K562 (cell line): ENCODE measurements at regions of chr1 and their contacts with region 1.

Region 1: GRCh38 chr1:226912587-226913176 is 27.4 kb upstream of the COQ8A start:
- DNase-seq: peak; percentile 64 to 81 (median 73)
- ATAC-seq: peak; percentile 98
- H3K4me3 ChIP-seq: no peak overlapping the region
- H3K27ac ChIP-seq: no peak overlapping the region
- H3K4me1 ChIP-seq: peaks cover 0 to 6% of the 10 kb centered on the region in 2 experiments; a peak in 2 of 5 replicates
- H3K27me3 ChIP-seq: no peaks in the 10 kb centered on the region
- CTCF ChIP-seq: peak; percentile 81 to 93 (median 82)
- EP300 ChIP-seq: no peak
- POLR2A ChIP-seq: no peak
- RAD21 ChIP-seq: peak; percentile 71 to 90

Region 2: GRCh38 chr1:226702957-226703831 is 209.5 kb before region 1 on chr1:
- CTCF ChIA-PET with region 1: no interaction called
- POLR2A ChIA-PET with region 1: no interaction called
- in situ Hi-C with region 1: no loop called
- intact Hi-C with region 1: no loop called
- DNase-seq: peak; percentile 49 to 90 (median 86)
- ATAC-seq: peak; percentile 86
- H3K4me3 ChIP-seq: peak overlapping the region; percentile 31
- H3K27ac ChIP-seq: peak overlapping the region; percentile 16; the same call in 1 of the 3 replicates
- H3K4me1 ChIP-seq: peaks cover 8 to 9% of the 10 kb centered on the region in 2 experiments; a peak in 2 of 5 replicates
- H3K27me3 ChIP-seq: peaks cover 27 to 45% of the 10 kb centered on the region in 2 experiments
- CTCF ChIP-seq: no peak
- EP300 ChIP-seq: no peak
- POLR2A ChIP-seq: no peak
- RAD21 ChIP-seq: no peak

Region 3: DNA sequence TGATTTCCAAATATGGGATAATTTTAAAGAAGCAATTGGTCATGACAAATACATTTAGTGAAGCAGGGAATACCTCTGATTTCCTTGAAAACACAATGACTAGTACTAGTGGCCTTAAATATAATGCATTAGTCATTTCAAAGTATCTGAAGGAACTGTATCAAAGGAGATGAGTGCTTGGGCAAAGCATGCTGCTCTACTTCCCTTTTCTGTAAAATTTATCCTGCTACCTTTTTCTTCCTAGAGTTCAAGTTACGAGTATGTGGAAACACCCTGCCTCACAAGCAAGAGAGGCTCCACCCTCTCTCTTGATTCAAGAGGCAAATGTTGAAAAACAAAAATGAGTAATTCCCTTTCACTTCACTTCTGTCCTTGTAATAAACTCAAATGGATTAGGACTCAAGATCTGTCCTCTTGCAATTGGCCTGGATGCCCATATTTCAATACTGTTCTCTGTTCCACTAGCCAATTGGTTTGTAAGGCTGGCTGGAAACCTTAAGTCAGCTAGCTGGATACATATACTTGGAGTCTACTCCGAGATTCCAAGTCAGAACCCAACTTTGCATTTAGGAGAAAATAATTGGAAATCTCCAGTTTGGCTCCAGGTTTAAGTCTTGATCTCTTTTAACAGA is 313.1 kb after region 1 on chr1:
- CTCF ChIA-PET with region 1: no interaction called
- POLR2A ChIA-PET with region 1: no interaction called
- in situ Hi-C with region 1: no loop called
- intact Hi-C with region 1: loop called (anchors 10 kb)
- DNase-seq: peak in 1 of 4 experiments; percentile 54
- ATAC-seq: peak; percentile 67
- H3K4me3 ChIP-seq: no peak overlapping the region
- H3K27ac ChIP-seq: peak overlapping the region; percentile 48; the same call in 1 of the 3 replicates
- H3K4me1 ChIP-seq: peaks cover 0 to 27% of the 10 kb centered on the region in 2 experiments; a peak in 4 of 5 replicates
- H3K27me3 ChIP-seq: no peaks in the 10 kb centered on the region
- CTCF ChIP-seq: no peak
- EP300 ChIP-seq: no peak
- POLR2A ChIP-seq: no peak
- RAD21 ChIP-seq: no peak